ENCODE measurements at regions of chrX and their contacts with region 1.

Region 1: GRCh38 chrX:121579016-121579760 is 531.8 kb downstream of the GLUD2 start:
- DNase-seq: peak; percentile 46
- H3K4me3 Mint-ChIP-seq: no peak overlapping the region
- H3K27ac Mint-ChIP-seq: no peak overlapping the region
- H3K4me1 Mint-ChIP-seq: no peaks in the 10 kb centered on the region
- H3K27me3 Mint-ChIP-seq: no peaks in the 10 kb centered on the region
- CTCF ChIP-seq: peak; percentile 40

Region 2: GRCh38 chrX:120790118-120790517 is 789.1 kb before region 1 on chrX:
- CTCF ChIA-PET with region 1: interaction called, 13 read pairs
- POLR2A ChIA-PET with region 1: no interaction called
- intact Hi-C with region 1: loop called (anchors 1 kb)
- DNase-seq: peak; percentile 82
- H3K4me3 Mint-ChIP-seq: no peak overlapping the region
- H3K27ac Mint-ChIP-seq: no peak overlapping the region
- H3K4me1 Mint-ChIP-seq: peaks cover 20% of the 10 kb centered on the region
- H3K27me3 Mint-ChIP-seq: no peaks in the 10 kb centered on the region
- CTCF ChIP-seq: peak; percentile 71

Region 3: DNA sequence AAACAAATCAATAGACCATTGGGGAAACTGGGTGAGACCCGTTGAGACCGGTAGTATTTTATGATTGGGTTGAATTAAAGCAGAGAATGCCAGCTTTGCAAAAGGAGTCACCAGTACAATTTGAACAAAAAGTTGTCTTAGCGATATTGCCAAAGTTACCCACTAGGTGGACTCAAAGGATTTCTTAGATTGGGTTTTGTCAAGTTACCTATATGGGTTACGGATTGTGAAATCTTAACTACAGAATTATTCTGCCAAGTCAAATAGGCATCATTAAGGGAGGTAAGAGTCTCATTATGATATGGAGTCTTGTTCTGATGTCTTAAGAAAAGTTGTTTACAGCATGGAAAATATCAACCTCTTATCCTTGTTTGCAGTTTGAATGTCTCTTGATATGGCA is 578.6 kb before region 1 on chrX:
- CTCF ChIA-PET with region 1: no interaction called
- POLR2A ChIA-PET with region 1: no interaction called
- intact Hi-C with region 1: loop called (anchors 1 kb)
- DNase-seq: peak; percentile 71
- H3K4me3 Mint-ChIP-seq: no peak overlapping the region
- H3K27ac Mint-ChIP-seq: no peak overlapping the region
- H3K4me1 Mint-ChIP-seq: no peaks in the 10 kb centered on the region
- H3K27me3 Mint-ChIP-seq: no peaks in the 10 kb centered on the region
- CTCF ChIP-seq: peak; percentile 42

Region 4: DNA sequence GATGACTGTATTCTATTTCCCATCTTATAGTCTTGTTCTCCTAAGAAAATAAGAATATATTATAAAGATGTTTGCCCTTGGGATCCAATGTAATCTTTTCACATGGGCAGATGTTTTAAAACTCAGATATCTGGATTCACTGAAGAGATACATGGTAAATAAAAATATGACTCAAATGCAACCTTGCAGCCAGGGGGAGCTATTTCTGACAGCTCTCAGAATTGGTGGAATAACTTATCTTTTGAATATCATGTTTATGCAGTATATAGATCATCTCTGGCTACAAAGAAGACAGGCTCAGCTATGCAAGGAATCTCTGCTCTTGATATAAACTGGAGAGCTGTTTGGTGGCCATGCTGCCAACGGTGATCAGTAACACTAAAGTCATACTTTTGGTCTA is 257.0 kb before region 1 on chrX:
- CTCF ChIA-PET with region 1: interaction called, 3 read pairs
- POLR2A ChIA-PET with region 1: no interaction called
- intact Hi-C with region 1: loop called (anchors 2 kb)
- DNase-seq: peak; percentile 27
- H3K4me3 Mint-ChIP-seq: no peak overlapping the region
- H3K27ac Mint-ChIP-seq: no peak overlapping the region
- H3K4me1 Mint-ChIP-seq: no peaks in the 10 kb centered on the region
- H3K27me3 Mint-ChIP-seq: no peaks in the 10 kb centered on the region
- CTCF ChIP-seq: peak; percentile 22

Measured in MCF 10A (cell line).